PC-9 (cell line): ENCODE measurements at regions of chr6 and their contacts with region 1.

Region 1: DNA sequence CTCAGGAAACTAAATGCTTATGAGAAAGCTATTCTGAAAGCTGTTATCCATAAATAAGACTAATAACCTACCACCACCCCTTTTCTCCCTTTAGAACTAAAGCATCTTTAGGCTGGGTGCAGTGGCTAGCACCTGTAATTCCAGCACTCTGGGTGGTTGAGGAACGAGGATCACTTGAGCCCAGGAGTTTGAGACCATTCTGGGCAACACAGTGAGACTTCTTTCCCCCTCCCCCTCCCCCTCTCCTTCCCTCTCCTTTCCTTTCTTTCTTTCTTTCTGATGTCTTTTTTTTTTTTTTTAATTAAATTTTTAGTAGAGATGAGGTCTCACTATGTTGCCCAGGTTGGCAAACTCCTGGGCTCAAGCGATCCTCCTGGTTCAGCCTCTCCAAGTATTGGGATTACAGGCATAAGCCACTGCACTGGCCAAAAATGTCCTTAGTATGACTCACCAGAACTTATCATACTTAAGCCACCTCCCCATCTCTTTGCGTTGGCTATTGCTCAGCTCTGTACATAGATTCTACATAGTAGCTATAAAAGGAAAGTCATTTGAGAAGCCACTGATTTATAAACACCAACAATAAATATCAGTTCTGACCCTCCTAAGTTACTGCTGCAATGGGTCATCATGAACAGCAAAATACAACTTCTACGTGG is 54.8 kb upstream of the SPDEF start:
- DNase-seq: peak in 1 of 2 experiments; percentile 72
- H3K4me3 ChIP-seq: no peak overlapping the region
- H3K27ac ChIP-seq: peak overlapping the region; percentile 72; the same call in 1 of the 2 replicates
- H3K4me1 ChIP-seq: peaks cover 5% of the 10 kb centered on the region; the same call in 1 of the 2 replicates
- H3K27me3 ChIP-seq: no peaks in the 10 kb centered on the region
- CTCF ChIP-seq: no peak

Region 2: DNA sequence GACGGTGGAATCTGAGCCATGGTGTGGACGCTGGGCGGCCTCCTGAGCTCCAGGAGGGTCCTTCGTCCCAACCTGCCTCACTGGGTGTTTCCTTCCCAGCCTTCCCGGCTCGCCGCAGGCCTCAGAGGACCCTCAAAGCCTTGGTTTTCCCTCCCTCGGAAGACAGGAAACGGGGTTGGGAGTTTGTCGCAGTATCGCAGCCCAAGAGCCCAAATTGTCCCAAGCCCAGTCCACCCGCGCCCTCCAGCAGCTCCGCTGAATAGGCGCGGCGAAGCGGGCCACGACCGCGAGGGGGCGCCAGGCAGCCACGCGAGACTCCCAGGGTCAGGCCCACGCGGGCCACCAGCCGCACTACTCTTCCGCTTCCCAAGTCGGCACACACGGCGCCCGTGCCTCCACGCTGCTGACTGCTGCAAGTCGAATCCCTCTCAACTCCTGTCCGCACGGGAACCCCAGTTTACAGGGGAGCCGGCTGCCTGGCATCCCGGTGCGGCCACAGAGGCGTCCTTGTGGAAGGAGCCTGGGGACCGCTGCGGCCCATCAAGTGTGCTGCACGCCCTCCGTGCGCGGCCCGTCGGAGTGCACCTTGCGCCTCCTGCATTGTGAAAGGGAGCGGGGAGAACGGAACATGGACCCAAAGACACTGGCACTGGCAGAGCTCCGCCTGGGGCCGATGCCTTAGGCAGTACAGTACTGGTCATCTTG is 414.7 kb before region 1 on chr6:
- CTCF ChIA-PET with region 1: no interaction called
- POLR2A ChIA-PET with region 1: interaction called, 5 read pairs
- intact Hi-C with region 1: loop called (anchors 1 kb)
- DNase-seq: peak; percentile 38 to 82
- H3K4me3 ChIP-seq: peak overlapping the region; percentile 55
- H3K27ac ChIP-seq: no peak overlapping the region
- H3K4me1 ChIP-seq: peaks cover 11% of the 10 kb centered on the region
- H3K27me3 ChIP-seq: no peaks in the 10 kb centered on the region
- CTCF ChIP-seq: peak; percentile 94

Region 3: DNA sequence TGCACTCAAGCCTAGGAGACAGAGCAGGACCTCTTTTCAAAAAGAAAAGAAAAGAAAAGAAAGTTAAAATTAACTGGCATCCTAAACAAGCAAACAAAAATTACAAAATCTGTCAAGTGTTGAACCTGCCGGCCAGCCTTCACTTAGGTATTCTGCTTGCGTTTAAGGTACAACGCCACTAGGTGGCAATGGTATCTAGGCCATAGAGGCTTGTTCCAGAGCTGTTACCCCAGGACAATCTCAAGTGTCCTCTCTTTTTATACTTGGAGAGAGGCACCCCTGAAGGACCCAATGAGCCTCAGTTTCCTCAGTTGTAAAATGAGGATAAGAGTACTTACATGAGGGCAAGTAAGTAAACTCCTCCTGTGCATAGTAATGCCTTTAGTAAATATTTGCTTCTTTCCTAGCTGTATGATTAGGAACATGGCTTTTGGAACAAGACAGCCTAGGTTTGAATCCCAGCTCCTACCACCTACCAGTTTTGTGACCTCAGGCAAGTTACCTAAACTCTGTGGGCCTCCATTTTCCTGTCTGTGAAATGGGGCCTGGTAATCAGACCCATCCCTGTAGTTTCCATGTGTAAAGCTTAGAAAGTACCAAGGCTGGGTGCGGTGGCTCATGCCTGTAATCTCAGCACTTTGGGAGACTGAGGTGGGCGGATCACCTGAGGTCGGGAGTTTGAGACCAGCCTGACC is 150.9 kb before region 1 on chr6:
- CTCF ChIA-PET with region 1: interaction called, 5 read pairs
- POLR2A ChIA-PET with region 1: no interaction called
- intact Hi-C with region 1: loop called (anchors 1 kb)
- DNase-seq: no peak
- H3K4me3 ChIP-seq: no peak overlapping the region
- H3K27ac ChIP-seq: no peak overlapping the region
- H3K4me1 ChIP-seq: peaks cover 15% of the 10 kb centered on the region
- H3K27me3 ChIP-seq: no peaks in the 10 kb centered on the region
- CTCF ChIP-seq: peak; percentile 86

Region 4: GRCh38 chr6:34583461-34583860 is 27.5 kb before region 1 on chr6:
- CTCF ChIA-PET with region 1: no interaction called
- POLR2A ChIA-PET with region 1: interaction called, 12 read pairs
- intact Hi-C with region 1: no loop called
- DNase-seq: no peak
- H3K4me3 ChIP-seq: no peak overlapping the region
- H3K27ac ChIP-seq: no peak overlapping the region
- H3K4me1 ChIP-seq: peaks cover 31% of the 10 kb centered on the region
- H3K27me3 ChIP-seq: no peaks in the 10 kb centered on the region
- CTCF ChIP-seq: no peak

Region 5: GRCh38 chr6:35139908-35140655 is 529.1 kb after region 1 on chr6:
- CTCF ChIA-PET with region 1: no interaction called
- POLR2A ChIA-PET with region 1: no interaction called
- intact Hi-C with region 1: loop called (anchors 10 kb)
- DNase-seq: peak; percentile 27 to 53
- H3K4me3 ChIP-seq: no peak overlapping the region
- H3K27ac ChIP-seq: no peak overlapping the region
- H3K4me1 ChIP-seq: peaks cover 17% of the 10 kb centered on the region
- H3K27me3 ChIP-seq: no peaks in the 10 kb centered on the region
- CTCF ChIP-seq: peak; percentile 93